HEK293 (cell line): ENCODE measurements at regions of chr17 and their contacts with region 1.

Region 1: GRCh38 chr17:48283411-48283810 is 146.6 kb downstream of the SKAP1 start:
- H3K4me3 ChIP-seq: no peak overlapping the region
- H3K27ac ChIP-seq: no peak overlapping the region
- H3K4me1 ChIP-seq: peaks cover 13% of the 10 kb centered on the region
- CTCF ChIP-seq: no peak

Region 2: GRCh38 chr17:47850692-47851573 is 432.5 kb before region 1 on chr17 and contains the start of gene SP6:
- CTCF ChIA-PET with region 1: no interaction called
- POLR2A ChIA-PET with region 1: no interaction called
- H3K4me3 ChIP-seq: peak within 1 kb of the TSS; percentile 46
- H3K27ac ChIP-seq: peak within 1 kb of the TSS; percentile 38; the same call in 1 of the 2 replicates
- H3K4me1 ChIP-seq: peaks cover 4% of the 10 kb centered on the region; the same call in 1 of the 2 replicates
- CTCF ChIP-seq: peak; percentile 70

Region 3: DNA sequence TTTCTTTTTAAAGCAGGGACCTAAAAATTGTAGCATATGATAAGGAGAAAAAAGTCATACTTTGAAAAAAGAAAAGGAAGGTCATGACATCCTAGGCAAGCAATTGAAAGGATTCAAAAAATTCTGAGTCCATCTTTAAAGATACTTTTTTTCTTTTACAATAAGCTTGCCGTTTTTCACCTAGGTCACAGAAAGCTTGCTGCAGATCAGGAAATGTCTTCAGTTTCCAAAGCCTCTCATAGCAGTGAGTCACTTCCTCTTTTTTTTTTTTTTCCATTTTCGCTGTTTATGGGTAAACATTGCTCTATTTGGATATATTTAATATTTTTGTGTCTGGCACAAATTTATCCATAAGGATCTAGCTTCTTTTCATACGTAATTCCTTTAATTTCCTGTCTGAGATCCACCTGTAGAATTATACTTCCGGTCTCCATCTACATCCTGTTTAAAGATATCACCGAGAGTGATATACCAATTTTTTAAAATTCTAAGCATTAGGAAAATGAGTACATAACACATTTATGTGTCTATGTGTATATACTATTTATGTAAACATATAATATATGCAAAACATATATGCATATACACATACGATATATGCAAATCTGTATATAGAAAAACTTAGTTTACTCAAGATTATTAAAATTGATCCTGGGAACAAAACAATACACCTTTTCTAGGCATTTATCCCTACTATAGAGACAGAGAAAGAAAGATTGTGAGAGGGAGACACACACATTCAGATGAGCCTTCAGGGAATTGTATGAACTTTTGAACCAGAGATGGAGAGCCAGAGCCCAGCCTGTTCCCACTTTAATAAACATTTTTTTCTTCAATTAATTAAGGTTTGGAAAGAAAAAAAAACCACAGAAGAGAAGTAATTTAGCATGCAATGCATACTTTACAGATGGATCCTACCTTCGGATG is 12.2 kb after region 1 on chr17:
- CTCF ChIA-PET with region 1: interaction called, 12 read pairs
- POLR2A ChIA-PET with region 1: no interaction called
- H3K4me3 ChIP-seq: no peak overlapping the region
- H3K27ac ChIP-seq: no peak overlapping the region
- H3K4me1 ChIP-seq: peaks cover 3% of the 10 kb centered on the region; the same call in 1 of the 2 replicates
- CTCF ChIP-seq: no peak